MCF 10A (cell line): ENCODE measurements at regions of chr3 and their contacts with region 1.

Region 1: GRCh38 chr3:150787741-150788370 is 24.9 kb upstream of the SIAH2 start:
- DNase-seq: peak; percentile 57
- H3K4me3 Mint-ChIP-seq: no peak overlapping the region
- H3K27ac Mint-ChIP-seq: no peak overlapping the region
- H3K4me1 Mint-ChIP-seq: peaks cover 8% of the 10 kb centered on the region
- H3K27me3 Mint-ChIP-seq: no peaks in the 10 kb centered on the region
- CTCF ChIP-seq: peak; percentile 52

Region 2: GRCh38 chr3:150803440-150803985 is 15.7 kb after region 1 on chr3:
- CTCF ChIA-PET with region 1: interaction called, 11 read pairs
- POLR2A ChIA-PET with region 1: interaction called, 5 read pairs
- intact Hi-C with region 1: no loop called
- DNase-seq: no peak
- H3K4me3 Mint-ChIP-seq: no peak overlapping the region
- H3K27ac Mint-ChIP-seq: no peak overlapping the region
- H3K4me1 Mint-ChIP-seq: no peaks in the 10 kb centered on the region
- H3K27me3 Mint-ChIP-seq: no peaks in the 10 kb centered on the region
- CTCF ChIP-seq: no peak

Region 3: DNA sequence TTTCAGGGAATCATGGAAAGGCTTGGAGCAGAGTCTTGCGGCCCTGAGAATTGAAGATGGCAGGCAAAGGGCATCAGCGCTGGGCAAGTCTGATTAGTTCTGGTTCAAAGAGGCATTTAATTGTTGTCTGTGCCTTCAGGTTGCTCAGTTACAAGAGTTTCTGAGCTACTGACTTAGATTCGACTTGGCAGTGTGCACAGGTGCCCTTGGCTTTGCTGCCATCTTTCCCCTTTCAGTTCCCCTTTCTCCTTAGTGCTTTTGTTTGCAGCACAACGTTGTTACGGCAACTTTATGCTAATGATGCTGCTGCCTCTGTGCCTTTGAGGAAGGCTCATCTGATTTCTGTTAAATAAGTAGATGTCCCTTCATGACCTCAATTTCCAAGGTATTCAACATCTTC is 478.0 kb after region 1 on chr3:
- CTCF ChIA-PET with region 1: no interaction called
- POLR2A ChIA-PET with region 1: no interaction called
- intact Hi-C with region 1: no loop called
- DNase-seq: no peak
- H3K4me3 Mint-ChIP-seq: no peak overlapping the region
- H3K27ac Mint-ChIP-seq: no peak overlapping the region
- H3K4me1 Mint-ChIP-seq: no peaks in the 10 kb centered on the region
- H3K27me3 Mint-ChIP-seq: no peaks in the 10 kb centered on the region
- CTCF ChIP-seq: no peak